HAP-1 (cell line): ENCODE measurements at regions of chr17 and their contacts with region 1.

Region 1: DNA sequence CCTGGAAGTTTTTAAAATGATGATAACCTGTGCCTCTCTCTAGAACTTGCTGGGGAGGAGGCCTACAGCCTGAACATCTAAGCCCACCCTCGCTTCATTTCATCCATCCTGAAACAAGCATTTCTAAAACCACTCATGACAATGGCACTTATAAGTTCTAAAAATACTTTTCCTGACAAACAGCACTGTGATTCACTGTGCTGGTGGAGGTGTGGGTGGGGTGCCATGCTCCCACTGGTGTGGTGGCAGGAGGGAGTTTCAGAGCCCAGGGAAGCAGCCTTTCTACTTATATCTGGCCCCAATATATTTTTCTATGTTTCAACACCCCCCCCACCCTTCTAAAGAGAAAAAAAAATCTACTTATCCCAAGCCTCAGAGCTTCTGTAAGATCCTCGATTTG is 52.6 kb downstream of the RAB11FIP4 start:
- DNase-seq: no peak
- H3K4me3 ChIP-seq: no peak overlapping the region
- H3K4me1 ChIP-seq: peaks cover 8% of the 10 kb centered on the region
- H3K27me3 ChIP-seq: no peaks in the 10 kb centered on the region

Region 2: GRCh38 chr17:31517524-31517923 is 73.5 kb after region 1 on chr17:
- in situ Hi-C with region 1: loop called (anchors 5 kb)
- DNase-seq: peak in 1 of 2 experiments; percentile 58
- H3K4me3 ChIP-seq: no peak overlapping the region
- H3K4me1 ChIP-seq: no peaks in the 10 kb centered on the region
- H3K27me3 ChIP-seq: no peaks in the 10 kb centered on the region

Region 3: GRCh38 chr17:31803494-31804213 is 359.6 kb after region 1 on chr17:
- in situ Hi-C with region 1: no loop called
- DNase-seq: no peak
- H3K4me3 ChIP-seq: no peak overlapping the region
- H3K4me1 ChIP-seq: no peaks in the 10 kb centered on the region
- H3K27me3 ChIP-seq: no peaks in the 10 kb centered on the region